MCF 10A (cell line): ENCODE measurements at regions of chr6 and their contacts with region 1.

Region 1: GRCh38 chr6:12313992-12314805 is 24.0 kb downstream of the EDN1 start:
- DNase-seq: peak; percentile 95
- H3K4me3 Mint-ChIP-seq: peak overlapping the region; percentile 62
- H3K27ac Mint-ChIP-seq: peak overlapping the region; percentile 88
- H3K4me1 Mint-ChIP-seq: peaks cover 39% of the 10 kb centered on the region
- H3K27me3 Mint-ChIP-seq: no peaks in the 10 kb centered on the region
- CTCF ChIP-seq: no peak

Region 2: GRCh38 chr6:11632795-11633511 is 681.2 kb before region 1 on chr6:
- CTCF ChIA-PET with region 1: no interaction called
- POLR2A ChIA-PET with region 1: no interaction called
- intact Hi-C with region 1: no loop called
- DNase-seq: no peak
- H3K4me3 Mint-ChIP-seq: no peak overlapping the region
- H3K27ac Mint-ChIP-seq: no peak overlapping the region
- H3K4me1 Mint-ChIP-seq: no peaks in the 10 kb centered on the region
- H3K27me3 Mint-ChIP-seq: no peaks in the 10 kb centered on the region
- CTCF ChIP-seq: no peak

Region 3: DNA sequence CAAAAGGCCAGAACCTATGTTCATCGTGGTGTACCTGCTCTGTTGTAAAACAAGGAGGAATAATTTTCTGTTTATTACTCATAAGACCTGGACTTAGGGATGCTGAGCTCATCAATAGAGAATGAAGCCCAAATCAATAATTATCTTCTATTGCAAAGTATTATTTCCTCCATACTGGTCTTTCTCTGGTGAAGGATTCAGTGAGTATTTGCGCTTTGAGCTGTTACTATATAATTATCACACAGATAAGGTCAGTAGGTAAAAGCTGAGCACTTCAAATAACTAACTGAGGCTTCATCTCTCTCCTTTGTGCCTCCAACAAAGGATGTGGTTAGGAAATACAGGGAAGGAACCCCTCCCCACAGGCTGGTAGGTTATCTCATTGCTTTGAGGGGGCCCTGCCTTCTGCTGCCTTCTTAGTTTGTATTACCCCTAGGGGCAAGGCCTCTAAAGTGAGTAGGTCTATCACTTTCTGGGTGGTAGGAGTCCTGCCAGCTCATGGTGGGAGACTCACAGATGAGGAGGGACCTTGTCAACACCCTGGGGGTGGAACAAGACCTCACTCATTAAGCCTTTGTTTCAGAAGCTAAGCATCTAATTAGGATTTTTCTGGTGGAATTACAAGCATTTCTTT is 10.4 kb after region 1 on chr6:
- CTCF ChIA-PET with region 1: interaction called, 13 read pairs
- POLR2A ChIA-PET with region 1: interaction called, 252 read pairs
- intact Hi-C with region 1: loop called (anchors 1 kb)
- DNase-seq: no peak
- H3K4me3 Mint-ChIP-seq: no peak overlapping the region
- H3K27ac Mint-ChIP-seq: peak overlapping the region; percentile 98
- H3K4me1 Mint-ChIP-seq: peaks cover 38% of the 10 kb centered on the region
- H3K27me3 Mint-ChIP-seq: no peaks in the 10 kb centered on the region
- CTCF ChIP-seq: no peak

Region 4: GRCh38 chr6:12343440-12344162 is 29.4 kb after region 1 on chr6:
- CTCF ChIA-PET with region 1: interaction called, 3 read pairs
- POLR2A ChIA-PET with region 1: interaction called, 15 read pairs
- intact Hi-C with region 1: no loop called
- DNase-seq: peak; percentile 83
- H3K4me3 Mint-ChIP-seq: no peak overlapping the region
- H3K27ac Mint-ChIP-seq: no peak overlapping the region
- H3K4me1 Mint-ChIP-seq: peaks cover 13% of the 10 kb centered on the region
- H3K27me3 Mint-ChIP-seq: no peaks in the 10 kb centered on the region
- CTCF ChIP-seq: no peak

Region 5: DNA sequence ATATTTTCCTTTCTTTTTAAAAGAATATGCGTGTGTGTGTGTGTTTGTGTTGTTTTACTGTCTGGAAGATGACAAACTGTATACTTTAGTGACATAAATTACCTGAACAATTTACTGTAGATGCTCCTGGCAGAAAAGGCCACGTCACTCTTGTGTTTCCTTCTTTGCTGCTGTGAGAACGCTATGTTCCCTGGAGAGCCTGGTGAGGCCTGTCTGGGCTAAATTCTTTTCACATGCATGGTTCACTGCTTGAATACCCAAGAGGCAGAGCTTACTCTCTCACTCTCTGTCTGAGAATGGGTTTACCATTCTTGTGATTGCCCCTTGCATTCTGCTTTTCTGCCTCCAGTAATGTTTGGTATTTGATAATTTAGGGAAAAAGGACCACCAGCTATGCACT is 40.3 kb after region 1 on chr6:
- CTCF ChIA-PET with region 1: interaction called, 10 read pairs
- POLR2A ChIA-PET with region 1: interaction called, 111 read pairs
- intact Hi-C with region 1: loop called (anchors 2 kb)
- DNase-seq: peak; percentile 90
- H3K4me3 Mint-ChIP-seq: peak overlapping the region; percentile 49
- H3K27ac Mint-ChIP-seq: peak overlapping the region; percentile 83
- H3K4me1 Mint-ChIP-seq: peaks cover 39% of the 10 kb centered on the region
- H3K27me3 Mint-ChIP-seq: no peaks in the 10 kb centered on the region
- CTCF ChIP-seq: no peak

Region 6: GRCh38 chr6:12483712-12484111 is 169.5 kb after region 1 on chr6:
- CTCF ChIA-PET with region 1: interaction called, 3 read pairs
- POLR2A ChIA-PET with region 1: interaction called, 4 read pairs
- intact Hi-C with region 1: loop called (anchors 2 kb)
- DNase-seq: peak; percentile 76
- H3K4me3 Mint-ChIP-seq: peak overlapping the region; percentile 35
- H3K27ac Mint-ChIP-seq: peak overlapping the region; percentile 47
- H3K4me1 Mint-ChIP-seq: peaks cover 25% of the 10 kb centered on the region
- H3K27me3 Mint-ChIP-seq: no peaks in the 10 kb centered on the region
- CTCF ChIP-seq: no peak

Region 7: GRCh38 chr6:12570461-12571030 is 256.3 kb after region 1 on chr6:
- CTCF ChIA-PET with region 1: interaction called, 3 read pairs
- POLR2A ChIA-PET with region 1: interaction called, 24 read pairs
- intact Hi-C with region 1: no loop called
- DNase-seq: peak; percentile 31
- H3K4me3 Mint-ChIP-seq: no peak overlapping the region
- H3K27ac Mint-ChIP-seq: peak overlapping the region; percentile 29
- H3K4me1 Mint-ChIP-seq: peaks cover 33% of the 10 kb centered on the region
- H3K27me3 Mint-ChIP-seq: no peaks in the 10 kb centered on the region
- CTCF ChIP-seq: no peak

Region 8: DNA sequence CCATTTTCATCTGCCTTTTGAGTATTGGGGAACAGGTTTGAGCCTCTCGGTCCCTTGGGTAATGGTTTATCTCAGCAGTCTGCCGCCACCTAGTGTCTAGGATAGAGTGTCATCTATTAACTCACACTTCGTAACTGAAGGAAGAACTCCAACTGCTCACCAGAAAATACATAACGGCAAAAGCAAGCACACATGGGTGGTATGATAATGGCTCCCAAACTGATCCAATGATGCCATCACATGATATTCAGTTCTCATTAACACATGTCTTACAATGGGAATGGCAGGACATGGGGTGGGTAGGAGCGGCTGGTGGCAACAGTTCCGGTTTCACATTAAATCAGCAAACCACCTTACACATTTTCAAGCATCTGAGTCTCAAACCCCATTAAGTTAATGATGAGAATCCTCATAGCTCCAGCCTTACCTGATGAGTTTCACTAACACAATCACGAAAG is 291.7 kb after region 1 on chr6:
- CTCF ChIA-PET with region 1: interaction called, 59 read pairs
- POLR2A ChIA-PET with region 1: interaction called, 10 read pairs
- intact Hi-C with region 1: loop called (anchors 1 kb)
- DNase-seq: peak; percentile 80
- H3K4me3 Mint-ChIP-seq: no peak overlapping the region
- H3K27ac Mint-ChIP-seq: no peak overlapping the region
- H3K4me1 Mint-ChIP-seq: peaks cover 30% of the 10 kb centered on the region
- H3K27me3 Mint-ChIP-seq: no peaks in the 10 kb centered on the region
- CTCF ChIP-seq: peak; percentile 69